Activated naive CD8-positive, alpha-beta T cell treated with anti-CD3 and anti-CD28 coated beads, Interleukin-2, amount 10 ng/mL, durations not matched to agents 7 days and 5 days (primary cell): ENCODE measurements at regions of chr2 and their contacts with region 1.

Region 1: GRCh38 chr2:191677646-191678436 is at the start of gene NABP1:
- DNase-seq: peak; percentile 99
- ATAC-seq: peak; percentile 73
- H3K4me3 Mint-ChIP-seq: peak within 1 kb of the TSS; percentile 98
- H3K27ac Mint-ChIP-seq: peak within 1 kb of the TSS; percentile 99
- H3K4me1 Mint-ChIP-seq: peaks cover 51% of the 10 kb centered on the region
- H3K27me3 Mint-ChIP-seq: no peaks in the 10 kb centered on the region
- total RNA-seq, gene NABP1: 72.6 to 75.9 TPM

Region 2: GRCh38 chr2:191569025-191569424 is 108.8 kb before region 1 on chr2:
- POLR2A ChIA-PET with region 1: interaction called, 11 read pairs
- DNase-seq: no peak
- ATAC-seq: no peak
- H3K4me3 Mint-ChIP-seq: no peak overlapping the region
- H3K27ac Mint-ChIP-seq: no peak overlapping the region
- H3K4me1 Mint-ChIP-seq: peaks cover 44% of the 10 kb centered on the region
- H3K27me3 Mint-ChIP-seq: peaks cover 37% of the 10 kb centered on the region

Region 3: GRCh38 chr2:191617575-191617974 is 60.3 kb before region 1 on chr2:
- POLR2A ChIA-PET with region 1: interaction called, 133 read pairs
- DNase-seq: no peak
- ATAC-seq: peak; percentile 89
- H3K4me3 Mint-ChIP-seq: peak overlapping the region; percentile 48
- H3K27ac Mint-ChIP-seq: peak overlapping the region; percentile 79
- H3K4me1 Mint-ChIP-seq: peaks cover 36% of the 10 kb centered on the region
- H3K27me3 Mint-ChIP-seq: no peaks in the 10 kb centered on the region

Region 4: DNA sequence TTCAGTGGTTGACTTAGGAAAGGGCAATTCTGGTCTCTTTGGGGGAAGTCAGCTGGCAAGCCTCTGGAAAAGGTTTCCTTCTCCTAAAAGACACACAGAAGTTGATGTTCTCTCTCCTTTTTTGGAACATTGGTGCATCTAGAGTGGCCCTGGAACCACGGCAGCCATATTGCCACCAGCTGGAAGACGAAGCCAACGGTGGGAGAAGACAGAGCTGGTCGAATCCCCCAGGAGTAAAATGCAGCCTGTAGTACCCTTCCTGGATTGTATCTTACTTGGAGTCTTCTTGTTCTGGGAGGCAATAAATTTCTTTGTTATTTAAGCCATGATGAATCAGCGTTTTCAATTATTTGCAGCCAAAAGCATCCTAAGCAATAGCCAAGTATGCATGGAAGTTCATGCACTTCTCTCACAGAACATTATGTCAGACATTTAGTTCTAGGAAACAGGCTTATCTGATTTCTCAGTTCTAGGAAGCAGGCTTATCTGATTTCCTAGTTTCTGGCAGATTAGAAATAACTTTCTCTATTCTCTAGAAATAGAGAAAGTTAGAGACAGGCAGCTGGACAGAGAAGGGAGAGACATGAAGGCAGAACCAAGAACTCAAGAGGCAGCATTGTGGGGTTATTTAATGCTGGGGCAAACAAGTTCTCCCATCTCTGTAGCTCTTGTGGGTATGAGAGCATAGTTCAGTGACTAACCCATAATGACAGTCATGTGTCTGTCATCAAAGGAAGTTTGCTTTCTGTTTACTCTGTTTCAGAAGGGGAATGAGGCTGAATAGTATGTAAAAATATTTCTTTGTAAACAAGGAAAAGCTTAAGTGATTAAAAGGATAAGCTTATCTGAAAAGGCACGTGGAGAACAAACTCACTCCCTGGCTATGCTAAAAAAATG is 40.4 kb before region 1 on chr2:
- POLR2A ChIA-PET with region 1: interaction called, 234 read pairs
- DNase-seq: no peak
- ATAC-seq: peak; percentile 84
- H3K4me3 Mint-ChIP-seq: peak overlapping the region; percentile 75
- H3K27ac Mint-ChIP-seq: peak overlapping the region; percentile 95
- H3K4me1 Mint-ChIP-seq: peaks cover 56% of the 10 kb centered on the region
- H3K27me3 Mint-ChIP-seq: no peaks in the 10 kb centered on the region

Region 5: DNA sequence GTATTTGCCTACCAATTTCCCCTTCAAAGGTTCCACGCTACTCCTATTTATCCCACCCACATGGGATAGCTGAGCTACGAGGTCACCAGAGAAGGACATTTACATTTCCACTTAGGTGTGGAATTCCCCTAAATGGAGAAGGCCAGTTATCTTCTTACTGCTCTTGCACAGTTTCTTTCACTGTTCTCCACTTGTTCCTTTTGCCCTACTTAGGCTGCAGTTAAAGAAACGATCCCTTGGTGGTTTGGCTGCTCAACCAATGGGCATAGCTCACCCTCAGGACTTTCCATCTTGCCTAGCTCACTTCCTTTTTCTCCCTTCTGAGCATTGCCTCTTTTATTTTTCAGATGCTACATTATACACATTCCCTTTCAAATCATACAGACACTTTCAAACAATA is 11.1 kb before region 1 on chr2:
- POLR2A ChIA-PET with region 1: interaction called, 29 read pairs
- DNase-seq: no peak
- ATAC-seq: no peak
- H3K4me3 Mint-ChIP-seq: no peak overlapping the region
- H3K27ac Mint-ChIP-seq: no peak overlapping the region
- H3K4me1 Mint-ChIP-seq: peaks cover 22% of the 10 kb centered on the region
- H3K27me3 Mint-ChIP-seq: no peaks in the 10 kb centered on the region